Ovary (tissue), 10 donors: ENCODE measurements at regions of chr20 and their contacts with region 1.

Region 1: GRCh38 chr20:42252116-42252515 is 633.9 kb upstream of the CHD6 start:
- DNase-seq: no peak
- H3K4me3 ChIP-seq: no peak overlapping the region
- H3K27ac ChIP-seq: no peak overlapping the region
- H3K4me1 ChIP-seq: no peaks in the 10 kb centered on the region
- H3K27me3 ChIP-seq: no peaks in the 10 kb centered on the region
- CTCF ChIP-seq: no peak
- EP300 ChIP-seq: no peak
- POLR2A ChIP-seq: no peak

Region 2: GRCh38 chr20:42074944-42075343 is 177.2 kb before region 1 on chr20:
- intact Hi-C with region 1: no loop called
- DNase-seq: no peak
- H3K4me3 ChIP-seq: no peak overlapping the region
- H3K27ac ChIP-seq: no peak overlapping the region
- H3K4me1 ChIP-seq: no peaks in the 10 kb centered on the region
- H3K27me3 ChIP-seq: no peaks in the 10 kb centered on the region
- CTCF ChIP-seq: no peak
- EP300 ChIP-seq: no peak
- POLR2A ChIP-seq: no peak

Region 3: GRCh38 chr20:42150225-42150624 is 101.9 kb before region 1 on chr20:
- intact Hi-C with region 1: loop called in 1 of 4 experiments (anchors 1 kb)
- DNase-seq: no peak
- H3K4me3 ChIP-seq: no peak overlapping the region
- H3K27ac ChIP-seq: no peak overlapping the region
- H3K4me1 ChIP-seq: no peaks in the 10 kb centered on the region
- H3K27me3 ChIP-seq: no peaks in the 10 kb centered on the region
- CTCF ChIP-seq: no peak
- EP300 ChIP-seq: no peak
- POLR2A ChIP-seq: no peak